ENCODE measurements at regions of chr5 and their contacts with region 1.

Region 1: DNA sequence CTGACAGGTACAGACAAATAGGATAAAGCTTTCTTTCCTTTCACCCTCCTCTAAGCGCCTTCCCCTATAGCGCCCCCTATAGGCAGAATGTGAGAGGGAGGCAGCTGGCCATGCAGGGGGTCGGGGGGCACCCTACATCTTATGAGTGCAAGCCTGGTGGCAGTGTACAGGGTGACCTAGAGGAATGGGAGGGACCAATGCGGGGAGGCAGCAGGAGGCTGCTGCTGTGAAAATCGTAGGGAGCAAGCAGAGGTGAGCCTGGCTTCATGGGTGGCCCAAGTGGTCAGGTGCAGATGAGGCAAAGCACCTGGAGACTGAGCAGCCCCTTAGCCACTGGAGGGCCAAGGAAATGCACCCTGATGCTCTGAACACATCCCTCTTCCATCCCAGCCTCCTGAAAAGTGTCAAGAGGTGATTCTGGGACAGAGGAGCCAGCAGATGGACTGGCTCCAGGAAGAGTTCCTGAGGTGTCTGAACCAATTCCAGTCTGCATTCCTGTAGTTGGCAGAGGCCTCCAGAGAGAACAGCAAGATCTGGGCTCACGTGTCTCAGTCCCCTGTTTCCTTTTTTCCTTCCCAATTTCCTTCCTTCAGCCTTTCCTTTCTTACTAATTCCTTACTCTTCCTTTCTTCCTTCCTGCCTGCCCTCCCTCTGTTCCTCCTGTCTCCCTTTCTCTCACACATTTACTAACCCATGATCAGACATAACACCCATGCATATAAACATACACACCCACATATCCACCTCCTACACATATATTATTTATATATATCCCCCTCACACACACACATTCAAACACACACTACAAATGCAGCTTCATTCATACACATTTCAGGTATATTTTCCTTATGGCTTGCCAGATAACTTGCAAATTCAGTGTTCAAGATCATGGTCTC is 32.8 kb upstream of the GALNT10 start:
- DNase-seq: peak; percentile 72
- ATAC-seq: peak; percentile 85
- H3K4me3 Mint-ChIP-seq: no peak overlapping the region
- H3K27ac Mint-ChIP-seq: no peak overlapping the region
- H3K4me1 Mint-ChIP-seq: peaks cover 2% of the 10 kb centered on the region
- H3K27me3 Mint-ChIP-seq: no peaks in the 10 kb centered on the region
- CTCF ChIP-seq: peak; percentile 96

Region 2: GRCh38 chr5:153981905-153982605 is 175.7 kb before region 1 on chr5:
- CTCF ChIA-PET with region 1: no interaction called
- POLR2A ChIA-PET with region 1: no interaction called
- DNase-seq: no peak
- ATAC-seq: no peak
- H3K4me3 Mint-ChIP-seq: no peak overlapping the region
- H3K27ac Mint-ChIP-seq: no peak overlapping the region
- H3K4me1 Mint-ChIP-seq: no peaks in the 10 kb centered on the region
- H3K27me3 Mint-ChIP-seq: no peaks in the 10 kb centered on the region
- CTCF ChIP-seq: no peak

Region 3: DNA sequence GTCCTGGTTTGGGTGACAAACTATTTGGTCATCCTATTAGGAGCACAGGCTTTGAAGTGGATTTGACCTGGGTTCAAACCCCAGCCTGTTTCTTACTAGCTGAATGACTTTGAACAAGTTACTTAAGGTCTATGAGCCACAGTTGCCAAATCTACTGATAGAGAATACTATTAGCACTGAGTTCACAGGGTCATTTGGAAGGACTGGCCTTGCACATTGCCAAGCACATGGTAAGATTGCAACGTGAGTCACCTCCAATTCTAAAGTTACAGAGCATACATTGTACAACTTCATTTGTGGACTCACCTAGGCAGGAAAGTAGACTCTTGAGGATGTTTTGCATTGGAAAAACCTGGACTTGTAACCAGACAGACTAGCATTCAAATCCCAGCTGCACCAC is 80.0 kb before region 1 on chr5:
- CTCF ChIA-PET with region 1: interaction called, 48 read pairs
- POLR2A ChIA-PET with region 1: no interaction called
- DNase-seq: no peak
- ATAC-seq: no peak
- H3K4me3 Mint-ChIP-seq: no peak overlapping the region
- H3K27ac Mint-ChIP-seq: no peak overlapping the region
- H3K4me1 Mint-ChIP-seq: peaks cover 20% of the 10 kb centered on the region
- H3K27me3 Mint-ChIP-seq: no peaks in the 10 kb centered on the region
- CTCF ChIP-seq: no peak

Region 4: GRCh38 chr5:154103233-154103632 is 54.5 kb before region 1 on chr5:
- CTCF ChIA-PET with region 1: interaction called, 13 read pairs
- POLR2A ChIA-PET with region 1: no interaction called
- DNase-seq: no peak
- ATAC-seq: no peak
- H3K4me3 Mint-ChIP-seq: no peak overlapping the region
- H3K27ac Mint-ChIP-seq: no peak overlapping the region
- H3K4me1 Mint-ChIP-seq: peaks cover 25% of the 10 kb centered on the region
- H3K27me3 Mint-ChIP-seq: no peaks in the 10 kb centered on the region; the same call in 1 of the 2 replicates
- CTCF ChIP-seq: no peak

Region 5: DNA sequence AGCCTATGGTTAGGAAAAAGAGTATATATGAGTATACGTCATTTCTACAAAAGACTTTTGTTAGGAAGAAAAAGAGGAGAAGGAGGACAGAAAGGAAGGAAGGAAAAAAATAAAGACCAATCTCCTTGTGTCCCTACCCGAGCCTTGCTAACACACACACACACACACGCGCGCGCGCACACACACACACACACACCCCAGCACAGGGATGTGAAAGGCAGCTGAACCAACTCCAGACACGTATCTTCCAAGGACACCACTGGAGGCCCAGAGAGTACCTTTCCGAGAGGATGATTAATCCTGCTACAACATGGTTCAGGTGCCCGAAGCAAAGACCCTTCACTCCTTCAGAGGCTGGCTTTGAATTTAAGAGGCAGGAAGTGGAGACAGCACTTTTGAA is 24.1 kb before region 1 on chr5:
- CTCF ChIA-PET with region 1: interaction called, 18 read pairs
- POLR2A ChIA-PET with region 1: no interaction called
- DNase-seq: no peak
- ATAC-seq: no peak
- H3K4me3 Mint-ChIP-seq: no peak overlapping the region
- H3K27ac Mint-ChIP-seq: no peak overlapping the region
- H3K4me1 Mint-ChIP-seq: peaks cover 18% of the 10 kb centered on the region
- H3K27me3 Mint-ChIP-seq: no peaks in the 10 kb centered on the region
- CTCF ChIP-seq: no peak

Region 6: DNA sequence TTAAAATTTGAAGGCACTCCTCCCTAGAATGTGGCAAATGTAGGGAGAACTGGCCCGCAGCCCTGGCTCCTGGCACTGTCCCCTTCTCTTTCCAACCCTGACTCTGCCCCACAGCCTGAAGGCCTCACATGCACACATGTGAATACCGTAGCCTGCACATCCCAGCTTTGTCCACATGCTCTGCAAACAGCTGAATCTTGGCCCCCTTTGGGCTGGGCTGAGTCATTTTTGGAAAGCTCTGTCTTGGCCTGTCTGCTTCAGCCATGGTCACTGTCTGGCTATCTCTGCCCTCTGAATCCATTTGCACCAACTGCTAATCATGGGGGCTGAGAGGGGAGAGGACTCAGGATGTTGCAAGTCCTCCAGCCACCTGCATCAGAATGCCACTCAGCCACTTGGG is 10.7 kb after region 1 on chr5:
- CTCF ChIA-PET with region 1: interaction called, 36 read pairs
- POLR2A ChIA-PET with region 1: interaction called, 5 read pairs
- DNase-seq: no peak
- ATAC-seq: no peak
- H3K4me3 Mint-ChIP-seq: no peak overlapping the region
- H3K27ac Mint-ChIP-seq: no peak overlapping the region
- H3K4me1 Mint-ChIP-seq: peaks cover 67% of the 10 kb centered on the region
- H3K27me3 Mint-ChIP-seq: no peaks in the 10 kb centered on the region
- CTCF ChIP-seq: no peak

Region 7: GRCh38 chr5:154196955-154197652 is 39.4 kb after region 1 on chr5:
- CTCF ChIA-PET with region 1: interaction called, 11 read pairs
- POLR2A ChIA-PET with region 1: no interaction called
- DNase-seq: no peak
- ATAC-seq: peak; percentile 34
- H3K4me3 Mint-ChIP-seq: no peak overlapping the region
- H3K27ac Mint-ChIP-seq: no peak overlapping the region
- H3K4me1 Mint-ChIP-seq: peaks cover 68% of the 10 kb centered on the region
- H3K27me3 Mint-ChIP-seq: peaks cover 5% of the 10 kb centered on the region
- CTCF ChIP-seq: no peak

Measured in WTC11 (cell line).